MCF 10A (cell line): ENCODE measurements at regions of chr15 and their contacts with region 1.

Region 1: GRCh38 chr15:82709421-82710207 is at the start of gene AP3B2:
- DNase-seq: peak; percentile 71
- H3K4me3 Mint-ChIP-seq: no peak within 1 kb of the TSS
- H3K27ac Mint-ChIP-seq: no peak within 1 kb of the TSS
- H3K4me1 Mint-ChIP-seq: no peaks in the 10 kb centered on the region
- H3K27me3 Mint-ChIP-seq: no peaks in the 10 kb centered on the region
- CTCF ChIP-seq: no peak
- total RNA-seq, gene AP3B2: 6.1 and 7.5 TPM in 2 replicates

Region 2: DNA sequence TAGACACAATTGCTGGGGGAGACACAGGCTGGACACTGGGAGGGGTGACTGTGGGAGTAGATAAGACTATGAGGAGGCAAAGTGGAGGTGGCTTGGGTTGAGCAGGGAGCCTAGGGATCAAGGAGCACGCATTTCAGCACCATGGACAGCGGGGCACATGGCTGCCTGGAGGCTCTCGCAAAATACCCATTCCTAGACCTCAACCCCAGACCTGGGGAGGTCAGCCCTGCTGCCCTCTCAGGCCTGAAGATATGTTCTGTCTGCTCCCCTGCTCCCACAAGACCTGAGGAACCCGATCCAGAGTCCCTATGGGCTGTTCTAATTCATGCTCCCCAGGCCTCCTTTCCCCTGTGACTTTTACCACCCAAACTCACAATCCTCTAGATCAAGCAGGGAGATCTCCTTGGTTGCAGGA is 46.4 kb before region 1 on chr15:
- CTCF ChIA-PET with region 1: no interaction called
- POLR2A ChIA-PET with region 1: no interaction called
- intact Hi-C with region 1: loop called (anchors 1 kb)
- DNase-seq: peak; percentile 70
- H3K4me3 Mint-ChIP-seq: no peak overlapping the region
- H3K27ac Mint-ChIP-seq: no peak overlapping the region
- H3K4me1 Mint-ChIP-seq: no peaks in the 10 kb centered on the region
- H3K27me3 Mint-ChIP-seq: peaks cover 12% of the 10 kb centered on the region
- CTCF ChIP-seq: no peak

Region 3: GRCh38 chr15:82698577-82699345 is 10.9 kb before region 1 on chr15:
- CTCF ChIA-PET with region 1: no interaction called
- POLR2A ChIA-PET with region 1: no interaction called
- intact Hi-C with region 1: no loop called
- DNase-seq: no peak
- H3K4me3 Mint-ChIP-seq: no peak overlapping the region
- H3K27ac Mint-ChIP-seq: no peak overlapping the region
- H3K4me1 Mint-ChIP-seq: no peaks in the 10 kb centered on the region
- H3K27me3 Mint-ChIP-seq: no peaks in the 10 kb centered on the region
- CTCF ChIP-seq: no peak

Region 4: GRCh38 chr15:82894971-82895520 is 185.4 kb after region 1 on chr15:
- CTCF ChIA-PET with region 1: no interaction called
- POLR2A ChIA-PET with region 1: no interaction called
- intact Hi-C with region 1: no loop called
- DNase-seq: no peak
- H3K4me3 Mint-ChIP-seq: no peak overlapping the region
- H3K27ac Mint-ChIP-seq: no peak overlapping the region
- H3K4me1 Mint-ChIP-seq: no peaks in the 10 kb centered on the region
- H3K27me3 Mint-ChIP-seq: no peaks in the 10 kb centered on the region
- CTCF ChIP-seq: no peak